ENCODE measurements at regions of chr2 and their contacts with region 1.

Region 1: GRCh38 chr2:135709992-135710391 is 31.7 kb upstream of the UBXN4 start:
- DNase-seq: peak; percentile 70
- CTCF ChIP-seq: peak; percentile 75

Region 2: GRCh38 chr2:135010200-135010942 is 699.6 kb before region 1 on chr2:
- in situ Hi-C with region 1: loop called (anchors 10 kb)
- DNase-seq: no peak
- CTCF ChIP-seq: no peak

Region 3: GRCh38 chr2:135473567-135473966 is 236.4 kb before region 1 on chr2:
- in situ Hi-C with region 1: loop called (anchors 25 kb)
- DNase-seq: peak; percentile 47
- CTCF ChIP-seq: peak; percentile 42

Region 4: DNA sequence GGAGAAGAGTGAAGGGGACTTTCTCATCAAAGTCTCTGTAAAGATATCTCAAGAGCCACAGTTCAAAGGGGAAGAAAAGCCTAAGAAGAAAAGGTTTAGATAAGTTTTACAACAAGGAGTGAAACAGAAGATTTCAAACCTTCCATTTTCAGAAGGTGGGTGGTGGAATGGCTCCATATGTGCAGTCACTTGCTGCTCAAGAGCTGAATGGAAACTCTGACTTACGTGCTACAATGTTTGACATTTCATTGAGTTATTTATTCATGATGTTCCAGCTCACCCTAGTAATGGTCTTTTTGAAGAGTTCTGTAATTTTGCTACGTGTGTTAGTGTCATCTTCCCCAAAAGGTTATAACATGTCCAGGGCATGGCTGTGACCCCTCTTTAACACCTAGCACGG is 105.3 kb after region 1 on chr2:
- in situ Hi-C with region 1: no loop called
- DNase-seq: peak; percentile 51
- CTCF ChIP-seq: no peak

Region 5: DNA sequence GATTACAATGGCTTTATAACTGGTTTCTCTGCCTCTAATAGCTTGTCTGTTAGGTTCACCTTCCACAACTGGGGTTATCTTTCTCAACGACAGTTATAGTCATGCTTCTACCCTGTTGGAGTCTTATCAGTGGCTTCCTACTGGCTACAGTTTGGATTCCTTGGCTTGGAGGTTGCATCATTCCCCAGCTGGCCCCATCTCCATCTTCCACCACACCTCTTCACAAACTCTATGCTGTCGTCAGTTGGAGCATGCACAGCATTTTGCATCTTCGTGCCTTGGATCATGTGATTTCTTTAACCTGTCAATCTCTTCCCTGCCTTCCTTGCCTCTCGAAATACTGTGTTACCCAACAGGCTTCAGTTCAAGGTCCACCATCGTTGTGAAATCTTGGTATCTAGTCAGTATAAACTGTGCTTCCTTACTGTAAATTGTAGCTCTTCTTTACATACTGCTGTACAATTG is 724.3 kb after region 1 on chr2:
- in situ Hi-C with region 1: no loop called
- DNase-seq: no peak
- CTCF ChIP-seq: no peak

Measured in GM13976 (cell line).